ENCODE measurements at regions of chr10 and their contacts with region 1.

Region 1: GRCh38 chr10:126177417-126178030 is 210.8 kb downstream of the ADAM12 start:
- DNase-seq: no peak
- ATAC-seq: no peak
- H3K4me3 ChIP-seq: no peak overlapping the region
- H3K27ac ChIP-seq: no peak overlapping the region
- H3K4me1 ChIP-seq: no peaks in the 10 kb centered on the region
- H3K27me3 ChIP-seq: no peaks in the 10 kb centered on the region
- CTCF ChIP-seq: no peak

Region 2: DNA sequence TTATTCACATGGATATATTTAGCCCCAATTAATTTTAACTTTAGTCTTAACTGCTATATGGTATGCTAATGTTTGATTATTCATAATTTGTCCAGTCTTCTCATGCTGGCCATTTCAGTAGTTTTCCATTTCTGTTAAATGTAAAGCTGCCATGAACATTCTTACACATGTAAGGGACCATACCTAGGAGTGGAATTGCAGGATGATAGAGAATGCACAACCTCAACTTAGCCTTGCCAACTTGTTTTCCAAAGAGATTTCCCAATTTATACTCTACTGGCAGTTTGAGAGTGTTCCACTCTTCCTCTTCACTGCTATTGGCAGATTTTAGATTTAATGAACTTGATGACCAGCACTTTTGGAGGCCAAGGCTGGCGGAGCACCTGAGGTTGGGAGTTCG is 213.0 kb before region 1 on chr10:
- CTCF ChIA-PET with region 1: interaction called, 14 read pairs
- POLR2A ChIA-PET with region 1: no interaction called
- in situ Hi-C with region 1: no loop called
- intact Hi-C with region 1: no loop called
- DNase-seq: no peak
- ATAC-seq: no peak
- H3K4me3 ChIP-seq: no peak overlapping the region
- H3K27ac ChIP-seq: no peak overlapping the region
- H3K4me1 ChIP-seq: no peaks in the 10 kb centered on the region
- H3K27me3 ChIP-seq: no peaks in the 10 kb centered on the region
- CTCF ChIP-seq: no peak

Region 3: DNA sequence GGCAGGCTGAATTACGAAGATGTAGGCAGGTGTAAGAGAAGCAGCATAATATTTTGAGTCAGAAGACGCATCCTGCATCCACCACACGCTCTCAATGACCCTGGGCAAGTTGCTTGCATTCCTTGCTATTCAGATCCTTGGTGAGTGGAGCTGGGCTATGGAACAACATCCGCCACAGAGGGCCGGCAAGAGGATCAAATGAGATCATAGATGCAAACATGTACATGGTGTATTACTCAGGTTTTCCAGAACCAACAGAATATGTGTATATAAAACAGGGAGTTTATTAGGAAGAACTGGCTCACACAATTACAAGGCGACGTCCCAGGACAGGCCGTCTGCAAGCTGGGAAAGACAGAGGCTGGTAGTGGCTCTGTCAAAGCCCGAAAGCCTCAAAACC is 159.3 kb after region 1 on chr10:
- CTCF ChIA-PET with region 1: no interaction called
- POLR2A ChIA-PET with region 1: no interaction called
- in situ Hi-C with region 1: no loop called
- intact Hi-C with region 1: no loop called
- DNase-seq: no peak
- ATAC-seq: 0 out of 2 replicates have a peak, but pooled peaks have one; percentile 17
- H3K4me3 ChIP-seq: no peak overlapping the region
- H3K27ac ChIP-seq: no peak overlapping the region
- H3K4me1 ChIP-seq: no peaks in the 10 kb centered on the region
- H3K27me3 ChIP-seq: no peaks in the 10 kb centered on the region
- CTCF ChIP-seq: no peak